Panc1 (cell line): ENCODE measurements at regions of chr11 and their contacts with region 1.

Region 1: GRCh38 chr11:60029015-60029632 is 11.1 kb upstream of the OOSP2 start:
- DNase-seq: no peak
- ATAC-seq: no peak
- H3K4me3 ChIP-seq: no peak overlapping the region
- H3K27ac ChIP-seq: no peak overlapping the region
- H3K4me1 ChIP-seq: no peaks in the 10 kb centered on the region
- H3K27me3 ChIP-seq: peaks cover 2% of the 10 kb centered on the region; the same call in 1 of the 2 replicates
- CTCF ChIP-seq: no peak

Region 2: DNA sequence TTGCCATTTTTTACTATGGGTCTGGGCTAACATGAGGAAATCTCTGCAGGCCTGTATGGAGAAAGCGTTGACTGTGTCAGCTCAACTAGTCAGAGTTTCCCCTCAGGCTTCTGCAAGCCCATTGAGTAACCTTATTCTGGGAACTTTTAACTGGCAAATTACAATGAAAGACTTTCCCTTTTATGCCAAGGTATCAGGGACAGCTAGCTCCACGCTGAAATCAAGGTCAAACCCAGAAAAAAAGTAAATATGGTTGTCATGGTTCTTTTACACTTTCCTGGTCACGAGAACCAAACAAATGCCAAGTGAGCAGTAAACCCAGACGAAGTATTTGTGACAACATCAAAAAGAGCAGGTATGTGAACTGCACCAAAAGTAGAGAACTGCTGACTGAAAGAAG is 427.3 kb before region 1 on chr11:
- CTCF ChIA-PET with region 1: no interaction called
- POLR2A ChIA-PET with region 1: no interaction called
- in situ Hi-C with region 1: no loop called
- intact Hi-C with region 1: no loop called
- DNase-seq: no peak
- ATAC-seq: no peak
- H3K4me3 ChIP-seq: no peak overlapping the region
- H3K27ac ChIP-seq: no peak overlapping the region
- H3K4me1 ChIP-seq: no peaks in the 10 kb centered on the region
- H3K27me3 ChIP-seq: no peaks in the 10 kb centered on the region
- CTCF ChIP-seq: no peak

Region 3: DNA sequence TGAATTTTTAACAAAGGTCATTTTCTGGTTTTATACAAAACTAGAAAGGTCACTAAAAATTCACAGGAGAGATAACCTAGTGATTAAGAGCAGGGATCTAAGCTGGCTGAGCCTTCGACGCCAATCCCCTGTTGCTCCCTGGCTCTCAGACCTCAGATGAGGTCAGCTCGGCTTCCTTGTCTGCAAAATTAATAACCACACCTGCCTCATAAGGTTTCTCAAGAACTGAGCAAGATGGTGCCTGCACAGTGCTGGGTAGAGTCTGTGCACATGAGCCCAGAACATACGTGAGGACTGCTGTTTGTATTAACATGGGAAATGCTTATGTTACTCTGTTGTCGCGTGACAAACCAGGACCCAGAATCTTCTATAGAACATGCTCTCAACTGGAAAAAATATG is 1048.8 kb after region 1 on chr11:
- CTCF ChIA-PET with region 1: interaction called, 13 read pairs
- POLR2A ChIA-PET with region 1: no interaction called
- in situ Hi-C with region 1: no loop called
- intact Hi-C with region 1: no loop called
- DNase-seq: no peak
- ATAC-seq: no peak
- H3K4me3 ChIP-seq: no peak overlapping the region
- H3K27ac ChIP-seq: no peak overlapping the region
- H3K4me1 ChIP-seq: no peaks in the 10 kb centered on the region
- H3K27me3 ChIP-seq: no peaks in the 10 kb centered on the region
- CTCF ChIP-seq: no peak